ENCODE measurements at regions of chr18 and their contacts with region 1.

Region 1: GRCh38 chr18:25289001-25289631 is 62.9 kb downstream of the ZNF521 start:
- DNase-seq: peak; percentile 29
- ATAC-seq: no peak

Region 2: DNA sequence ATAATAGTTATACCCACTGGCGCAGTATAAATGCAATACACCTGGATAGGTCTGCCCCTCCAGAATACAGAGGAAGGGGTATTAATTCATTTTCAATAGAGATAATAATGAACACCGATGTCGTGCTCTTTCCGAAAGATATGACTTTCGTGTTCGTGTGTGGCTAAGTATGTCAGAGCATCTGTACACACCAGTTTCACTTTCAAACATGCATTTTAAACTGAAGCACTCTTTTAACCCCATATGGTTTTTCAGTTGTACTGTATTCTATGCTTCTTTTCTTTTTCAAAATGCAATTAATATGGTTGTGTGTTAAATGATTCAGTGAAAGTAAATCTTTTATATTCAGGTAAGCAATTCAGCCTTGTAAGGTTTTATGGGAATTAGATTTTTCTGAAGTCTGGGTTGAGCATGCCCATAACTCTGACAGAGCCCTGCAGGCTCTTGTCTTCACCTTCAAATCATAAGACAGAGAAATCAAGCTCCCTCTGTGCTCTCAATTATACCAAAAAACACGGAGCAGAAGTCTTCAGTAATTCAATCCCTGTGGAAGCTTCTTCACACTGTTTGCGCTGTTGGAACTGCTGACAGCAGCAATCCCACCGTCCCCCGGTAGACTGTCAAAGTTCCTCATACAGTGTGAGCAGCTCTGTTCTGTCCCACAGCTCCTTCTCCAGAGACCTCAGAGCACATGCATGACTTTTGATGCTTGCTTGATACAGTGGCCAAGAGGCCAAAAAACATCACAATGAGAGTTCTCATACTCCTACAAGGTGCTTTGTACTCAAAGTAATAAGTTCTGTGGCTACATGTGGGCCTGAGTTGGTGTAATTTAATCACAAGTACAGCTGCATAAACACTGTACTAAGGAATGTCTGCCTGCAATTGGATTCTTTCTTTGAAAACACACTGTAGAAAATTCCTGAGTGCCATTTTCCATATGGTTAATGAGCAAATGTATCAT is 124.0 kb before region 1 on chr18:
- intact Hi-C with region 1: loop called (anchors 10 kb)
- DNase-seq: no peak
- ATAC-seq: peak; percentile 65

Region 3: DNA sequence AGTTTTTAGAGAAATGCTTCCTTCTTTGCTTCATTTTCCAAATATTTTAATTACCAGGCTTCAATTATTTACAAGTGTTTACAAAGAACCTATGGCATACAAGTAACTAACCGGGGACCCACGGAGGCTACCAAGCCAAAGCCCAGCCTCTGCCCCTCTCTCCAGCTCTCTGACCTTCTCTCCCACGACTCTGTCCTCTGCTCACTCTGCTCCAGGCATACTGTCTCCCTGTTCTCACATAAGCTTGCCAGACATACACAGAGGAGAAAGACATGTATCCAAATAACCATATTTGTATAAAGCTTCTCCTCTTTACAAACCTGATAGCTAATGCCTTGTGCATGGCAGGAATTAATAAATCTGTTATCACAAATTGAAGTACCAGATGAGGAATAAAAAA is 78.5 kb before region 1 on chr18:
- intact Hi-C with region 1: loop called (anchors 10 kb)
- DNase-seq: no peak
- ATAC-seq: peak; percentile 80

Region 4: GRCh38 chr18:25247725-25248124 is 41.4 kb before region 1 on chr18:
- intact Hi-C with region 1: loop called (anchors 5 kb)
- DNase-seq: no peak
- ATAC-seq: no peak

Region 5: GRCh38 chr18:25351777-25352628 is 62.9 kb after region 1 on chr18 and contains the start of gene ZNF521:
- intact Hi-C with region 1: loop called (anchors 5 kb)
- DNase-seq: peak; percentile 90
- ATAC-seq: peak; percentile 80
- total RNA-seq, gene ZNF521: 24.5 TPM